Common myeloid progenitor, CD34-positive (primary cell): ENCODE measurements at regions of chr19 and their contacts with region 1.

Region 1: GRCh38 chr19:11380653-11381534 is 3.2 kb downstream of the EPOR start:
- DNase-seq: peak; percentile 96 to 98 (median 97)
- H3K4me3 ChIP-seq: peak overlapping the region; percentile 47 to 87 (median 71)
- H3K27ac ChIP-seq: peak overlapping the region; percentile 50 to 80
- H3K4me1 ChIP-seq: peaks cover 13 to 66% (median 61%) of the 10 kb centered on the region in 4 experiments
- H3K27me3 ChIP-seq: peaks cover 0 to 6% (median 0%) of the 10 kb centered on the region in 5 experiments

Region 2: GRCh38 chr19:11288343-11288742 is 92.6 kb before region 1 on chr19:
- CTCF ChIA-PET with region 1: interaction called, 18 read pairs
- POLR2A ChIA-PET with region 1: no interaction called
- DNase-seq: peak; percentile 45 to 61 (median 51)
- H3K4me3 ChIP-seq: no peak overlapping the region
- H3K27ac ChIP-seq: no peak overlapping the region
- H3K4me1 ChIP-seq: peaks cover 0 to 5% (median 3%) of the 10 kb centered on the region in 4 experiments
- H3K27me3 ChIP-seq: peaks cover 0 to 14% (median 3%) of the 10 kb centered on the region in 5 experiments

Region 3: GRCh38 chr19:11399667-11400066 is 18.8 kb after region 1 on chr19:
- CTCF ChIA-PET with region 1: interaction called, 10 read pairs
- POLR2A ChIA-PET with region 1: no interaction called
- DNase-seq: no peak
- H3K4me3 ChIP-seq: no peak overlapping the region
- H3K27ac ChIP-seq: no peak overlapping the region
- H3K4me1 ChIP-seq: no peaks in the 10 kb centered on the region
- H3K27me3 ChIP-seq: peaks cover 0 to 3% (median 0%) of the 10 kb centered on the region in 5 experiments

Region 4: GRCh38 chr19:11422163-11423021 is 41.5 kb after region 1 on chr19:
- CTCF ChIA-PET with region 1: interaction called, 34 read pairs
- POLR2A ChIA-PET with region 1: interaction called, 5 read pairs
- DNase-seq: peak; percentile 70 to 84 (median 81)
- H3K4me3 ChIP-seq: peak overlapping the region in 4 of 7 experiments; percentile 3 to 61 (median 48)
- H3K27ac ChIP-seq: no peak overlapping the region
- H3K4me1 ChIP-seq: peaks cover 0 to 47% (median 36%) of the 10 kb centered on the region in 4 experiments
- H3K27me3 ChIP-seq: peaks cover 0 to 68% (median 41%) of the 10 kb centered on the region in 5 experiments

Region 5: DNA sequence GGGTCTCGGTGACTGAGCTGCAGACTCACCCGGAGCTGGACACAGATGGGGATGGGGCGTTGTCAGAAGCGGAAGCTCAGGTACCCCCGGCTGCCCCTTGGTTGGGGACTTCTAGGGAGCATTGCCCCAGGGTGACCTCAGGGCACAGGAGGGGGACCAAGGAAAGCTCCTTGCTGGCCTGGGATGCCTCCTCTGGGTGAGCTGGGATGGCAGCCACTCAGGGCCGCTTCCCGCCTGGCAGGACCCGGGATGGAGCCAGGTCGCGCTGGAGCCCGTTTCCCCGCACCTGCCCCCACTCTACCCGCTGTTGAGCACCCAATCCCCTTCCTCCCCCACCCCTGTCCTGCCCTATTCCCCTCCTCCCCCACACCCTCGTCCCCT is 65.4 kb after region 1 on chr19:
- CTCF ChIA-PET with region 1: interaction called, 21 read pairs
- POLR2A ChIA-PET with region 1: no interaction called
- DNase-seq: no peak
- H3K4me3 ChIP-seq: no peak overlapping the region
- H3K27ac ChIP-seq: no peak overlapping the region
- H3K4me1 ChIP-seq: no peaks in the 10 kb centered on the region
- H3K27me3 ChIP-seq: no peaks in the 10 kb centered on the region